Endothelial cell of umbilical vein (primary cell): ENCODE measurements at regions of chr18 and their contacts with region 1.

Region 1: DNA sequence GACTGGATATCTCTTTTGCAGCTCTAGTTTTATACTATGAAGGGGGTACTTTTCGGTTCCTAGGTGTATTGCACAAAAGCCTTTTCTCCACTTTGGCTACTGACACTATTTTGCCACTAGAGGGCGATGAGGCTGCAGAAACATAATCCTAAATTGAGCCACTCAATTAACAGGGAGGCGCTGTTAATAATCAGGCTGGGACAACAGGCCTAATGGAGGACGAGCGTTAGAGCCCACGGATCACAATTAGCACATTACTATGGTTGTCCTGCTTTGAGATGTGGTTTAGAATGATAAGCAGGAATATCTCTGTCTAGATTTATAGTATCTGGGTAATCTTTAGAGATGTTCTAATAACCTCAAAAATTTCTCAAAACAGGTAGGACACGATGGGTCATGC is 62.2 kb upstream of the PMAIP1 start:
- DNase-seq: peak; percentile 75
- H3K4me3 ChIP-seq: no peak overlapping the region
- H3K27ac ChIP-seq: no peak overlapping the region
- H3K4me1 ChIP-seq: no peaks in the 10 kb centered on the region
- H3K27me3 ChIP-seq: peaks cover 14 to 27% of the 10 kb centered on the region in 2 experiments
- CTCF ChIP-seq: peak; percentile 82 to 83
- POLR2A ChIP-seq: no peak

Region 2: DNA sequence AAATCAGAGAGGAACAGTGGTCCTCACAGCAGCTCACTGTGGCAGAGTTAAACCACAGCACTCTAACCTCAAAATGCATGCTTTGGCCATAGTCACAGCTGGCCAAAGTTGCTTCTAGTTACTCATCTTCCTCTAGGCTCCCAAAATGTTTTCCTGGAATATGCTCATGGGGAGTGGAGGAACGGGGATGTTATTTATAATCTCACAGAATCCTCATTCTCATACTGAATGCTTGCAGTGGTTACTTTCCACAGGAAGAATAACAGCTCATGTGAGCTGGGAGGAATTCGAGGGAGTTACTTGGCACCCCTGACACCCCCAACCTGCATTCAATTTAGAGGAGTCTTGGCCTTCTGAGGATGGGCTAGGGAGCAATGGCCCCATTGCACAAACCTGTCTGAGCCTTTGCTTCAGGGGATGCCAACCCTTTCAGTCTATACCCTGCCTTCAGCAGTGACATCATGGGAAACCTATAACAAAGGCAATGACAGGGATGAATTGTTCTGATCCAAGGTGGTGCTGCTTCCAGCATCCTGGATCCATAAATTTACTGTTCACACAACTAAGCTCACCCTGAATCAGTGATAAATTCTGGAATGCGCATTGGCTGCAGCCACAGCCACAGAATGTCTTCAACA is 117.9 kb before region 1 on chr18:
- CTCF ChIA-PET with region 1: no interaction called
- POLR2A ChIA-PET with region 1: no interaction called
- dilution Hi-C with region 1: no loop called
- intact Hi-C with region 1: no loop called
- DNase-seq: no peak
- H3K4me3 ChIP-seq: no peak overlapping the region
- H3K27ac ChIP-seq: no peak overlapping the region
- H3K4me1 ChIP-seq: no peaks in the 10 kb centered on the region
- H3K27me3 ChIP-seq: no peaks in the 10 kb centered on the region
- CTCF ChIP-seq: no peak
- POLR2A ChIP-seq: no peak

Region 3: GRCh38 chr18:59885579-59886163 is 48.1 kb after region 1 on chr18:
- CTCF ChIA-PET with region 1: interaction called, 12 read pairs
- POLR2A ChIA-PET with region 1: no interaction called
- dilution Hi-C with region 1: no loop called
- intact Hi-C with region 1: loop called (anchors 1 kb)
- DNase-seq: peak; percentile 72
- H3K4me3 ChIP-seq: peak overlapping the region in 1 of 3 experiments; percentile 39
- H3K27ac ChIP-seq: peak overlapping the region; percentile 89
- H3K4me1 ChIP-seq: peaks cover 41% of the 10 kb centered on the region
- H3K27me3 ChIP-seq: no peaks in the 10 kb centered on the region
- CTCF ChIP-seq: no peak
- POLR2A ChIP-seq: no peak

Region 4: GRCh38 chr18:59899298-59900221 is 62.0 kb after region 1 on chr18 and contains the start of gene PMAIP1:
- CTCF ChIA-PET with region 1: interaction called, 29 read pairs
- POLR2A ChIA-PET with region 1: interaction called, 19 read pairs
- dilution Hi-C with region 1: no loop called
- intact Hi-C with region 1: loop called (anchors 1 kb)
- DNase-seq: peak; percentile 91
- H3K4me3 ChIP-seq: peak within 1 kb of the TSS; percentile 58 to 88 (median 76)
- H3K27ac ChIP-seq: peak within 1 kb of the TSS; percentile 75
- H3K4me1 ChIP-seq: peaks cover 27% of the 10 kb centered on the region
- H3K27me3 ChIP-seq: peaks cover 1 to 9% of the 10 kb centered on the region in 2 experiments
- CTCF ChIP-seq: no peak
- POLR2A ChIP-seq: peak; percentile 99
- total RNA-seq, gene PMAIP1: 11.9 and 13.5 TPM in 2 replicates

Region 5: DNA sequence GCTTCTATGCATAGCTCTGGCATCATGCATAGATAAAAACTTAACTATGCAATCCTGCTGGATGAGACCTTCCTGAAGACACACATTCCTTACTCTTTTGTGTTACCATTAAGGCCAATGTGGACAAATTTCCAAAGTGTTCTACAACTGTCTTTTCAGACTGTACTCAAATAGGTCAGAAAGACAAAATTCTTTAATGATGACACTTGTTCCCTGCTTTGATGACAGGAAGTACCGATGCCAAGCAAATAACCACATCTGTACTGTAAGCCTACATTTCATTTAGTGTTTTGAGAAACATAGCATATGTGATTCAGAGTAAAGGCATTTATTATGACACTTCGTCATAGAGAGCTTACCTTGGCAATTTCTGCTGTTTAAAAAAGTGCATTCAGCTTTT is 117.2 kb after region 1 on chr18:
- CTCF ChIA-PET with region 1: interaction called, 11 read pairs
- POLR2A ChIA-PET with region 1: no interaction called
- dilution Hi-C with region 1: no loop called
- intact Hi-C with region 1: no loop called
- DNase-seq: no peak
- H3K4me3 ChIP-seq: no peak overlapping the region
- H3K27ac ChIP-seq: no peak overlapping the region
- H3K4me1 ChIP-seq: no peaks in the 10 kb centered on the region
- H3K27me3 ChIP-seq: no peaks in the 10 kb centered on the region
- CTCF ChIP-seq: no peak
- POLR2A ChIP-seq: no peak

Region 6: GRCh38 chr18:59996370-59996966 is 158.9 kb after region 1 on chr18:
- CTCF ChIA-PET with region 1: interaction called, 29 read pairs
- POLR2A ChIA-PET with region 1: no interaction called
- dilution Hi-C with region 1: loop called (anchors 25 kb)
- intact Hi-C with region 1: no loop called
- DNase-seq: peak; percentile 10
- H3K4me3 ChIP-seq: no peak overlapping the region
- H3K27ac ChIP-seq: no peak overlapping the region
- H3K4me1 ChIP-seq: no peaks in the 10 kb centered on the region
- H3K27me3 ChIP-seq: no peaks in the 10 kb centered on the region
- CTCF ChIP-seq: peak; percentile 20 to 47
- POLR2A ChIP-seq: no peak

Region 7: DNA sequence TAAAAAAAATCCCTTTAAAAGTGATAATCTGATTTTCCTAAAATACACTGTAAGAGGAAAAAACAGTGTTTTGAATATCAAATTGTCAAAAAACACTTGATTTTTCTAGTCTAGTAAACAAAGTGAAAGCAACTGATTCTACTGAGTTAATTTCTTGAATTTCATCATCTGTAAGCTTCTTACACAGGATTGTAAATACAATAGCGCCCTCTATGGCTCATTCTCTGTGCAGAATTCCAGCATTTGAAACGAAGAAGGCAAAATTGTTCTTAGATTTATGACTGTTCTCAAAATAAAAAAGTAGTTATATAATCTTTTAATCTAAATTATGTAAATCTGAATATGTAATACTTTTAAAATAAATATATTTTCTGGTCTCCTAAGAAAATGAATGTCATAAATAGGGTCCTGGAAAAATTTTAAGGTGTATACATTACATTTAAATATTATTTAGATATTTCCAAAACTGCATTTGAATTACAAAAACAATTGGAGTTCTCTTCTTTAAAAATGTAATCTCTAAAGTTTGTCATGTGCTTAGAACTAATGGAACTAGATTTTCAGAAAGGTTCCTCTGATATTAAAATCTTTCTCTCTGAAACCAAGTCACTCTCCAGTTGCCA is 711.9 kb after region 1 on chr18:
- CTCF ChIA-PET with region 1: interaction called, 31 read pairs
- POLR2A ChIA-PET with region 1: no interaction called
- dilution Hi-C with region 1: no loop called
- intact Hi-C with region 1: loop called (anchors 1 kb)
- DNase-seq: peak; percentile 64
- H3K4me3 ChIP-seq: no peak overlapping the region
- H3K27ac ChIP-seq: no peak overlapping the region
- H3K4me1 ChIP-seq: no peaks in the 10 kb centered on the region
- H3K27me3 ChIP-seq: no peaks in the 10 kb centered on the region
- CTCF ChIP-seq: peak; percentile 53 to 57
- POLR2A ChIP-seq: no peak